GM12878 (cell line): ENCODE measurements at regions of chr13 and their contacts with region 1.

Region 1: GRCh38 chr13:106619688-106620555 is 52.0 kb upstream of the ARGLU1 start:
- DNase-seq: peak; percentile 2
- ATAC-seq: peak; percentile 99
- H3K4me3 ChIP-seq: no peak overlapping the region
- H3K27ac ChIP-seq: no peak overlapping the region
- H3K4me1 ChIP-seq: no peaks in the 10 kb centered on the region
- H3K27me3 ChIP-seq: peaks cover 0 to 2% of the 10 kb centered on the region in 2 experiments; a peak in 1 of 4 replicates
- CTCF ChIP-seq: peak; percentile 77 to 86 (median 79)
- EP300 ChIP-seq: no peak
- POLR2A ChIP-seq: no peak
- RAD21 ChIP-seq: peak; percentile 88

Region 2: GRCh38 chr13:106083620-106084350 is 536.1 kb before region 1 on chr13:
- CTCF ChIA-PET with region 1: interaction called, 4 read pairs
- POLR2A ChIA-PET with region 1: no interaction called
- RAD21 ChIA-PET with region 1: no interaction called
- SMC1A ChIA-PET with region 1: interaction called, 3 read pairs
- in situ Hi-C with region 1: no loop called
- intact Hi-C with region 1: loop called (anchors 2 kb)
- DNase-seq: no peak
- ATAC-seq: peak; percentile 93
- H3K4me3 ChIP-seq: no peak overlapping the region
- H3K27ac ChIP-seq: no peak overlapping the region
- H3K4me1 ChIP-seq: no peaks in the 10 kb centered on the region
- H3K27me3 ChIP-seq: no peaks in the 10 kb centered on the region
- CTCF ChIP-seq: peak; percentile 45 to 85 (median 62); a peak in 5 of 6 replicates
- EP300 ChIP-seq: no peak
- POLR2A ChIP-seq: no peak
- RAD21 ChIP-seq: peak; percentile 76